Activated CD8-positive, alpha-beta memory T cell treated with anti-CD3 and anti-CD28 coated beads, Interleukin-2, amount 10 ng/mL, durations not matched to agents 7 days and 5 days (primary cell): ENCODE measurements at regions of chr2 and their contacts with region 1.

Region 1: GRCh38 chr2:109510136-109511028 is 103.4 kb downstream of the SEPTIN10 start:
- DNase-seq: peak; percentile 81
- ATAC-seq: peak; percentile 61
- H3K4me3 Mint-ChIP-seq: no peak overlapping the region
- H3K27ac Mint-ChIP-seq: no peak overlapping the region
- H3K4me1 Mint-ChIP-seq: peaks cover 20% of the 10 kb centered on the region
- H3K27me3 Mint-ChIP-seq: peaks cover 4% of the 10 kb centered on the region

Region 2: DNA sequence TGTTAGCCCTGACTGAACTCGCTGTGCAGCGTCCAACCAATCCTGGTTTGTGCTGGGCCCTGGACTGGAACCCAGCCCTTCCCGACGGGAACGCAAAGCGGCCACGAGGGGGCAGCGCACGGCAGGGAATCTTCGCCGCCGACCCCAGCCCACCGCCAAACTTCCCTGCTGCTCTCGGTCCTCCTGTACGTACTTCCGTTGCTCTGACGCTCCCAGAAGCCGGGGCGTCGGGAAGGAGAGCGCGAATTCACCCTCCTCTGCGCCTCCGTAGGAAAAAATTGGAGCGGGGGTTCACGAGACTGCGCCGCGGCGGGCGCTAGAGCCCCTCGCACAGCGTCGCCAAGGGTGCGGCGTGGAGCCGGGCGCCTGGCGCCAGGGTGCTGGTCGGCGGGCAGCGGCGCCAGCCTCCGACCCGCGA is 382.3 kb before region 1 on chr2:
- CTCF ChIA-PET with region 1: interaction called, 22 read pairs
- DNase-seq: peak; percentile 52
- ATAC-seq: peak; percentile 52
- H3K4me3 Mint-ChIP-seq: no peak overlapping the region
- H3K27ac Mint-ChIP-seq: no peak overlapping the region
- H3K4me1 Mint-ChIP-seq: peaks cover 12% of the 10 kb centered on the region
- H3K27me3 Mint-ChIP-seq: peaks cover 69% of the 10 kb centered on the region

Region 3: DNA sequence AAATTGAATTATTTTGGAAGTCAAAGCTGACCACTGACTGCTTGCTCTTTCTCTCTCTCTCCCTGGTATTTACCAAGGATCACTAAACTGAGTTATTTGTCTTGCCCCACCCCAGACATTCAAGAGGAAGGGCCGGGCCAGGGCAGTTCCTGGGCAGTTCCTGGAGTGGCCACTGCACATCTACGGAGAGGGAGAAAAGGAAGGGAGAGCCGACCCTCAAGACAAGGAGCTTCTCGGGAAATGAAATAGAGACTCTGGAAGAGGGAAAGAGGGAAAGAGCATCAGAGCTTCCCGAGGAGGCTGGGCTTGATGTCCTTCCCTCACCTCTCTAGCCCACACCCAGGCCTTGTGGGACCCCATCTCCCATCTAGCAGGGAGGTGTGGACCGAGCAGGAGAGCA is 20.3 kb after region 1 on chr2:
- CTCF ChIA-PET with region 1: no interaction called
- DNase-seq: no peak
- ATAC-seq: no peak
- H3K4me3 Mint-ChIP-seq: no peak overlapping the region
- H3K27ac Mint-ChIP-seq: no peak overlapping the region
- H3K4me1 Mint-ChIP-seq: no peaks in the 10 kb centered on the region
- H3K27me3 Mint-ChIP-seq: peaks cover 29% of the 10 kb centered on the region

Region 4: GRCh38 chr2:109690822-109691547 is 180.6 kb after region 1 on chr2:
- CTCF ChIA-PET with region 1: no interaction called
- DNase-seq: no peak
- ATAC-seq: no peak
- H3K4me3 Mint-ChIP-seq: no peak overlapping the region
- H3K27ac Mint-ChIP-seq: no peak overlapping the region
- H3K4me1 Mint-ChIP-seq: peaks cover 1% of the 10 kb centered on the region
- H3K27me3 Mint-ChIP-seq: peaks cover 4% of the 10 kb centered on the region

Region 5: DNA sequence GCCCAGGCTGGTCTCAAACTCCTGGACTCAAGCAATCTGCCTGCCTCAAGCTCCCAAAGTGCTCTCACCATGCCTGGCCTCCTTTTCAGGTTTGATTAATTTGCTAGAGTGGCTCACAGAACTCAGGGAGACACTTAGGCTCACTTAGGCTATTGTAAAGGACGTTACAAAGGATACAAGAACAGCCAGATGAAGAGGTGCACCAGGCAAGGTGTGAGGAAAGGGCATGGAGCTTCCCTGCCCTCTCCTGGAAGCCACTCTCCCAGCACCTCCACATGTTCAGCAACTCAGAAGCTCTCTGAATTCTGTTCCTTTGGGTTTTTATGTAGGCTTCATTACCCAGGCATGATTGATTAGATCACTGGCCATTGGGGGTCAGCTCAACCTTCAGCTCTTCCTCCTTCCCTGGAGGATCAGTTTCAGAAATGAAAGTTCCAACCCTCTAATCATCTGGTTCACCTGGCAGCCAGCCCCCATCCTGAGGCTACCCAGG is 205.0 kb after region 1 on chr2:
- CTCF ChIA-PET with region 1: no interaction called
- DNase-seq: no peak
- ATAC-seq: no peak
- H3K4me3 Mint-ChIP-seq: no peak overlapping the region
- H3K27ac Mint-ChIP-seq: no peak overlapping the region
- H3K4me1 Mint-ChIP-seq: no peaks in the 10 kb centered on the region
- H3K27me3 Mint-ChIP-seq: no peaks in the 10 kb centered on the region